Posterior vena cava (tissue), 2 donors: ENCODE measurements at regions of chr10 and their contacts with region 1.

Region 1: GRCh38 chr10:71396084-71396720 is 518 bp upstream of the CDH23 start:
- DNase-seq: peak; percentile 82

Region 2: DNA sequence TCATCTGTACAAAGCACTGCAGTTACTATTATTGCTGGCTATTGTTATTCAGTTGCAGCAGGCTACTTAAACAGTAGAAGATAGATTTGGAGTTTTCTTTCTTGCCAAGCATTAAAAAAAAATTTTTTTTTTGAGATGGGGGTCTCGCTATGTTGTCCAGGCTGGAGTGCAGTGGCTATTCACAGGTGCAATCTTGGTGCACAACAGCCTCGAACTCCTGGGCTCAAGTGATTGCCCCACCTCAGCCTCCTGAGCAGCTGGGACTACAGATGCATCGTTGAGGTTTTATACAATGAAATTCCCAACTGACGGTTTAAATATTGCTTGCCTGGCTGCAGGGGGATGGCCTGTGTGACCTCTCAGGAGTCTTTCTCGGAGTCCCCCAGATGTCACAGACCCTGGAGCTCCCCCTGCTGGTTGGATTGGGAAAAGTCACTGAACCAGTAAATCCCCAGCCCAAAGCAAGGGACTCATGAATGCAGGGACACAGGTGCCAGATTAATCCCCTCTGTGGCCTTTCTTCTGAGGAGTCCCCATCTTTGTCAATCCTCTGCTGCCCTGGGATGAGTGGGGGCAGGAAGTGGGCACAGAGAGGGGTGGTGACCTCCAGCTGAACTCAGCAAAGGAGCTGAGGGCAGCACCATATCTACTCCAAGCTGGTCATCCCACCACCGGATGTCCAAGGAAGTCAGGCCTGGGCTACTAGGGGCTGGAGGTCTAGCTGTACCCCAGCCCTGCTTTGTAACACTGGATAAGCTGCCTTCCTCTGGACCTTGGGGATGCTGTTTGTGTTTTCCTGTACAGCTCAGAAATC is 173.8 kb after region 1 on chr10:
- intact Hi-C with region 1: loop called (anchors 2 to 5 kb)
- DNase-seq: peak; percentile 86

Region 3: DNA sequence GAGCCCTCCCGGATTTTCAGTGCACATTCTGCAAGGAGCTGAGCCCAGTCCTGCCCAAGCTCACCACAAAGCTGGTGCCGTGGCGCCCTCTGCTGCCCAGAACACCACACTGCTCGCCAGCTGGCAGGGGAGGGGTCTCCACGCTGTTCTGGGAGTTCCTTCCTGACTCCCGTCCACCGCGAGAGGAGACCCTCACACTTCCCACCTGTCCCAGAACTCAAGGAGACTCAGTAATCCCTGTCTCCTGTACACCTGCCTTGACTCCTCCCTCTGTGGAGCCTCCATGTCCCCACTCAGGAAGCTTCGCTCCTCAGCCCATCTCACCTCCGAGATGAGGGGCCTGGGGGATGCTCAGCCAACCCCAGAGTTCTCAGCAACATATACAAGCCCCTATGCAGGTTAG is 312.1 kb after region 1 on chr10:
- intact Hi-C with region 1: loop called in 1 of 2 experiments (anchors 5 kb)
- DNase-seq: peak; percentile 89

Region 4: GRCh38 chr10:71812016-71812912 is 416.1 kb after region 1 on chr10:
- intact Hi-C with region 1: loop called in 1 of 2 experiments (anchors 5 kb)
- DNase-seq: peak; percentile 92